Ascending aorta (tissue), 2 donors: ENCODE measurements at regions of chr19 and their contacts with region 1.

Region 1: DNA sequence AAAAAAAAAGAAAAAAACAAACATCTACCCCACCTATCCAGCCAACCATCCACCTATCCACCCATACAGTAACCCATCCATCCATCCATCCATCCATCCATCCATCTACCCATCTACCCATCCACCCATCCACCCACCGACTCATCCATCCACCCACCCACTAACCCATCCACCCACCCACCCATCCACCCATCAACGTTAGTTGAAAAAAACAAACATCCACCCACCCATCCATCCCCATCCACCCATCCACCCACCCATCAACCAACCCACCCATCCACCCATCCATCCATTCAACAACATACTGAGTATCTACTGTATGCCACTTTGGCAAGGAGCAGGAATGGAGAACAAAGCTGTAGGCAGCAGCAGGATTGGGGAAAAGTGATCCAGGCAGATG is 6.1 kb upstream of the AP3D1 start:
- DNase-seq: no peak
- H3K4me3 ChIP-seq: no peak overlapping the region
- H3K27ac ChIP-seq: no peak overlapping the region
- H3K4me1 ChIP-seq: peaks cover 0 to 15% of the 10 kb centered on the region in 2 donors
- H3K27me3 ChIP-seq: no peaks in the 10 kb centered on the region
- CTCF ChIP-seq: no peak

Region 2: DNA sequence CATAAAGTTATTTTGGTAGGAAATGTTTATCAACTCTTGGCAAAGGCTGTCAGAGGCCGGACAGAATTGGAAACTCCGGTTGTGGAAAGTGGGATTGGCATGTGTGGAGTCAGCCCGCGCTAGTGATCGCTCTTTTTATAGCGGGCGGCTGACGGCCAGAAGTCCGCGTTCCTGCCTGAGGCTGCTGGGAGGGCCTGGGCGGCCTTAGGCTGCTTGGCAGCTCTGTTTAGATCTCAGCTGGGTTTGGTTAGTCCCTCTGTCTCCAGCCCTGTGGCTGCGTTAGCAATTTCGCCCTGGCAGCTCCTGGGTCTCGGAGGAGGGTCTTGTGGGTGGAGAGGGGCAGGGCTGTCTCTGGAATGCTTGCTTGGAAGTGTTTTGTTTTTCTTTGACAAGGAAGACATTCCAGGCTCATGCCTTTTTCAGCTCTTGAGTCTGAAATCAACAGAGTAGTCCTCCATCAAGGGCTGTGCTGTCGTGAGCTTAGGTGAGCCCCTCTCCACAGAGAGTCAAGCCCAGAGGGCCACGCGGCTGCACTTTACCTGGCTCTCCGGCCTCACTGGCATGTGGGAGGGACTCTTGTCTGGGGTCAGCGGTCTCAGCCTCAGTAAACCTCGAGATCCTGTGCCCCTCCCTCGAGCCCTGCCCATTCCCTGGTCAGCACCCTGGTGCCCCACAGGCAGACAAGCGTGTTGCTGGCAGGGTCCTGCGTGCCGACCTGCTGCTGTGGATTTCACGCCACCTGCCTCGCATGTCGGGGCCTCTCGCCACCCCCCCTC is 28.8 kb after region 1 on chr19:
- intact Hi-C with region 1: loop called (anchors 2 kb)
- DNase-seq: peak; percentile 64 to 95
- H3K4me3 ChIP-seq: peak overlapping the region in 1 of 2 donors; percentile 41
- H3K27ac ChIP-seq: peak overlapping the region; percentile 81 to 87
- H3K4me1 ChIP-seq: peaks cover 26 to 57% of the 10 kb centered on the region in 2 donors
- H3K27me3 ChIP-seq: no peaks in the 10 kb centered on the region
- CTCF ChIP-seq: no peak

Region 3: DNA sequence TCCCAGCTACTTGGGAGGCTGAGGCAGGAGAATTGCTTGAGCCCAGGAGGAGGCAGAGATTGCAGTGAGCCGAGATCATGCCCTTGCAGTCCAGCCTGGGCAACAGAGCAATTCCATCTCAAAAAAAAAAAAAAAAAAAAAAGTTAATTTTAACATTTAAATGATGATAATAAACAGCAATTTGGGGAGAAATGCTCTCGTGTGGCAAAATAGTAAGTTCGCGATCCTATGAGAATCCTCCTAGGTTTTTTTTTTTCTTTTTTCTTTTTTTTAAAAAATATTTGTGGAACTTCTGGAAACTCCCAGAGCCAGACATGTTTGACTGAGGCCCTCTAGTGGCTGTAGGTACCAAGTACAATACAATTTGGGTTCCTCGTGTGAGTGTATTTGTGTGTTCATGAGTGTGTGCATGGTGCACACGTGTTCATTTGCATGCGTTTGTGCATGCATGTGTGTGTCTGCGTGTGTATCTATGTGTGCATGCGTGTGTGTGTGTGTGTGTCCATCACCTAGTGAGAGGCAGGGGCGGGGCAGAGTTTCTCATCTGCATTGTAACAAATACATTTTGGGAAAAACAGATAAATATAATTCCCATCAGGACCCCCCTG is 233.8 kb after region 1 on chr19:
- intact Hi-C with region 1: loop called (anchors 2 kb)
- DNase-seq: no peak
- H3K4me3 ChIP-seq: no peak overlapping the region
- H3K27ac ChIP-seq: no peak overlapping the region
- H3K4me1 ChIP-seq: no peaks in the 10 kb centered on the region
- H3K27me3 ChIP-seq: no peaks in the 10 kb centered on the region
- CTCF ChIP-seq: peak; percentile 62 to 83 (median 74)